B cell (primary cell): ENCODE measurements at regions of chrX and their contacts with region 1.

Region 1: GRCh38 chrX:132615391-132616131 is 126.7 kb upstream of the MBNL3 start:
- DNase-seq: peak; percentile 57
- ATAC-seq: no peak
- H3K4me3 ChIP-seq: no peak overlapping the region
- H3K4me3 Mint-ChIP-seq: no peak overlapping the region
- H3K27ac ChIP-seq: no peak overlapping the region
- H3K27ac Mint-ChIP-seq: no peak overlapping the region
- H3K4me1 ChIP-seq: no peaks in the 10 kb centered on the region
- H3K4me1 Mint-ChIP-seq: no peaks in the 10 kb centered on the region
- H3K27me3 ChIP-seq: no peaks in the 10 kb centered on the region
- H3K27me3 Mint-ChIP-seq: no peaks in the 10 kb centered on the region
- CTCF ChIP-seq: peak; percentile 61

Region 2: GRCh38 chrX:131854581-131854980 is 761.0 kb before region 1 on chrX:
- CTCF ChIA-PET with region 1: interaction called, 5 read pairs
- POLR2A ChIA-PET with region 1: no interaction called
- intact Hi-C with region 1: loop called (anchors 10 kb)
- DNase-seq: peak; percentile 31
- ATAC-seq: no peak
- H3K4me3 ChIP-seq: no peak overlapping the region
- H3K4me3 Mint-ChIP-seq: no peak overlapping the region
- H3K27ac ChIP-seq: no peak overlapping the region
- H3K27ac Mint-ChIP-seq: no peak overlapping the region
- H3K4me1 ChIP-seq: no peaks in the 10 kb centered on the region
- H3K4me1 Mint-ChIP-seq: no peaks in the 10 kb centered on the region
- H3K27me3 ChIP-seq: peaks cover 0 to 2% (median 0%) of the 10 kb centered on the region in 4 experiments
- H3K27me3 Mint-ChIP-seq: no peaks in the 10 kb centered on the region
- CTCF ChIP-seq: peak; percentile 34

Region 3: DNA sequence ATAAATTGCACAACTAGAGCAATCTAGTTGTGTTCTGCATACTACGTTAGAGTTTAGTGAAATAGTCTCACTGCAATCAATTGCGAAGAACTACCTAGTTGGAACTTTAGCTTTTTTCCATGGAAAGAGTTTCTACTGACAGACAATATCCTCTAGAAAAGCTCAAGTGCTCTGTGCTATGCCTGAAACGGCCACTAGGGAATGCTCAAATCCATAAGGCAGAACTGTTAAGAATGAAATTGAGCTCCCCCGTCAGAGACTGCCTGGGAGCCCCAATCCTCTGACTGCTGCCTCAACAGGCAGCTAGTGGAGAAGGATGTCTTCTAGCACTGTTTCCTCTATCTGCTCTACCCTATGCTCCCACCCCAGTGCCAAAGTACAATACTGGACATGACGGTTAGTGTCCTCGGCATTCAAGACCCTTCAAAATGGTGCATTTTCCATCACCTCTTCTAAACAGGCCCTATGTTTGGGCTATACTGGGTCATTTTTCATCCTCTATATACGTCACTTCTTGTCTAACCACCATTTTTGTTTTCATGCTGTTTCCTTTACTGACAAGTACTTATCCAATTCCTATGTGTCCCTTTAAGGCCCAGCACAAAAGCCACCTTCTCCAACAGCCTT is 523.0 kb before region 1 on chrX:
- CTCF ChIA-PET with region 1: interaction called, 4 read pairs
- POLR2A ChIA-PET with region 1: no interaction called
- intact Hi-C with region 1: loop called (anchors 5 kb)
- DNase-seq: peak; percentile 59
- ATAC-seq: peak; percentile 65
- H3K4me3 ChIP-seq: no peak overlapping the region
- H3K4me3 Mint-ChIP-seq: no peak overlapping the region
- H3K27ac ChIP-seq: no peak overlapping the region
- H3K27ac Mint-ChIP-seq: no peak overlapping the region
- H3K4me1 ChIP-seq: no peaks in the 10 kb centered on the region
- H3K4me1 Mint-ChIP-seq: no peaks in the 10 kb centered on the region
- H3K27me3 ChIP-seq: no peaks in the 10 kb centered on the region
- H3K27me3 Mint-ChIP-seq: peaks cover 3% of the 10 kb centered on the region
- CTCF ChIP-seq: peak; percentile 67

Region 4: GRCh38 chrX:132181353-132181752 is 434.2 kb before region 1 on chrX:
- CTCF ChIA-PET with region 1: no interaction called
- POLR2A ChIA-PET with region 1: no interaction called
- intact Hi-C with region 1: no loop called
- DNase-seq: no peak
- ATAC-seq: no peak
- H3K4me3 ChIP-seq: no peak overlapping the region
- H3K4me3 Mint-ChIP-seq: no peak overlapping the region
- H3K27ac ChIP-seq: no peak overlapping the region
- H3K27ac Mint-ChIP-seq: no peak overlapping the region
- H3K4me1 ChIP-seq: no peaks in the 10 kb centered on the region
- H3K4me1 Mint-ChIP-seq: no peaks in the 10 kb centered on the region
- H3K27me3 ChIP-seq: no peaks in the 10 kb centered on the region
- H3K27me3 Mint-ChIP-seq: no peaks in the 10 kb centered on the region
- CTCF ChIP-seq: no peak

Region 5: DNA sequence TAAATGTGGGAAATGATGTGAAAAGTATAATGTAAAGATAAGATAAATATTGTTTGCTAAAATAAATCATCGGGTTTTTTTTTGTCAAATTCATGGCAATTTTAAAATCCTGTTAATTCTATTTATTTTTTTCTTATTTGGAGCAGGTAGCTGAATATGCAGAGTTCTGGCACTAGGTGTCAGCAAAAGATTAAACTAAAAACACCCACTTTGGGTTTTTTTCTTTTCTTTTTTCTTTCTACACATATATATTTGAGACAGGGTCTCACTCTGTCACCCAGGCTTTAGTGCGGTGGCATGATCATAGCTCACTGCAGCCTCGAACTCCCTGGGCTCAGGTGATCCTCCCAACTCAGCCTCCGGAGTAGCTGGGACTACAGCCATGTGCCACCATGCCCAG is 389.4 kb before region 1 on chrX:
- CTCF ChIA-PET with region 1: interaction called, 16 read pairs
- POLR2A ChIA-PET with region 1: no interaction called
- intact Hi-C with region 1: loop called (anchors 1 kb)
- DNase-seq: no peak
- ATAC-seq: no peak
- H3K4me3 ChIP-seq: no peak overlapping the region
- H3K4me3 Mint-ChIP-seq: no peak overlapping the region
- H3K27ac ChIP-seq: no peak overlapping the region
- H3K27ac Mint-ChIP-seq: no peak overlapping the region
- H3K4me1 ChIP-seq: no peaks in the 10 kb centered on the region
- H3K4me1 Mint-ChIP-seq: peaks cover 6% of the 10 kb centered on the region
- H3K27me3 ChIP-seq: peaks cover 0 to 3% (median 0%) of the 10 kb centered on the region in 4 experiments
- H3K27me3 Mint-ChIP-seq: no peaks in the 10 kb centered on the region
- CTCF ChIP-seq: peak; percentile 51

Region 6: DNA sequence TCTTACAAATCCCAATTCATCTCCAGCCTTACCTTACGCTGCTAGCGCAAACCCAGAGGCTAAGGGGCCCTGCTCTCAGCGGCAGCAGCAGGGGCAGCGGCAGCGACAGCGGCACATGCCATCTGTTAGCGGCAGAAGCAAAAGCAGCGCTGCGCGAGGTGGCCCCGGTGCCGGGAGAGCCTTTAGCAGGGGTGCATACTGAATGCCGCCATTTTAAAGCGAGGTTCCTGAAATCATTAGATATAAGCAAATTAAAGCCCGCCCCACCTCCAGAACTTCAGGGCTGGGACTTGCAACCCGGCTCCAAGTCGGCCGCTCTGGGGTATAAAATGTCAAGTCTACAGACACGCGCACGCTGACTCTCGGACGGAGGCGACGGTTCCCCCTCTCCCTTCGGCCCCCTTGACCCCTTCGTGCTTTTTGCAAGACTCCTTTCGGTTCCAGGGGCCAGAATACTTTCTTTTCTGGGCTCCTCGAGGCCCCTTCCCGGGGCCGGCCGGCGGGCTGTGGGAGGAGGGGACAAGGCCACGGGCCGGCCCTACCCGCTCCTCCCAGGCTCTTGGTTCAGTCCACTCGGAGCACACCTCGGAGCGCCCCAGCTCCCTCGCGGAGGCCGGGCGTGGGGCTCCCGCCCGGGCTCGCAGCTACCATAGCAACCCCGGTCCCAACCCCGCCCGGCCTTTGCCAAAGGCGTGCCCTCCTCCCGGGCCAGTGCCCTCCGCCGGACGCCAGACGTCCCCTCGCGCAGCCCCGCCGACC is 126.6 kb before region 1 on chrX and contains the start of gene MBNL3:
- CTCF ChIA-PET with region 1: interaction called, 9 read pairs
- POLR2A ChIA-PET with region 1: no interaction called
- intact Hi-C with region 1: loop called (anchors 5 kb)
- DNase-seq: peak; percentile 87
- ATAC-seq: peak; percentile 67
- H3K4me3 ChIP-seq: peak within 1 kb of the TSS; percentile 61 to 76 (median 66)
- H3K4me3 Mint-ChIP-seq: peak within 1 kb of the TSS; percentile 95
- H3K27ac ChIP-seq: peak within 1 kb of the TSS; percentile 85 to 87
- H3K27ac Mint-ChIP-seq: peak within 1 kb of the TSS; percentile 98
- H3K4me1 ChIP-seq: peaks cover 51 to 53% of the 10 kb centered on the region in 2 donors
- H3K4me1 Mint-ChIP-seq: peaks cover 51% of the 10 kb centered on the region
- H3K27me3 ChIP-seq: no peaks in the 10 kb centered on the region
- H3K27me3 Mint-ChIP-seq: no peaks in the 10 kb centered on the region
- CTCF ChIP-seq: no peak
- total RNA-seq, gene MBNL3: 60.2 and 63.1 TPM in 2 replicates

Region 7: DNA sequence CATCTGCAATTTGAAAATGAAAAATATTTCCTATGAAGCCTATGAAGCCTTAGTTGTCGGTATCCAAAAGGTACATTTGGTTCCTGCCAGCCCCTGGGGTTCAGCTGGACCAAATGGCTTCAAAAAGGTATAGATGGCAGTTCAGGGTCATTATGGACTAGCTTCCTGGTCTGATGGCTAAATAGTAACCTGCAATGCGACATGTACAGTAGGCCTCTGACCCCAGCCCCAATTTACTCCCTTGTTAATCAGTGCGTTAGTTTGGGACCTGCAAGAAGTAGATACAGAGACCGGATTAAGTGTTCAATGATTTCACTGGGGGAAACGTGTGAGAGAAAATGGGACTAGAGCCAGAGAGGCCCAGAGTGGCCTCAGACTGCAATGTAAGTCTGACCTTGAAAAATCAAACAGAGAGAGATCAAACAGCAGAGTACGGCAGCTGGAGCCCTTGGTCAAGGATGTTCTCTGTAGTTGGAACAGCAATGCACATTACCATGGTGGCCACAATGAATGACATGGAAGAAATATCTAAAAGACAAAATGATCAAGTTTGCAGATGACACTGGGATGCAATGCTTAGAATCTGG is 11.8 kb before region 1 on chrX:
- CTCF ChIA-PET with region 1: interaction called, 10 read pairs
- POLR2A ChIA-PET with region 1: no interaction called
- intact Hi-C with region 1: no loop called
- DNase-seq: no peak
- ATAC-seq: no peak
- H3K4me3 ChIP-seq: no peak overlapping the region
- H3K4me3 Mint-ChIP-seq: no peak overlapping the region
- H3K27ac ChIP-seq: no peak overlapping the region
- H3K27ac Mint-ChIP-seq: no peak overlapping the region
- H3K4me1 ChIP-seq: no peaks in the 10 kb centered on the region
- H3K4me1 Mint-ChIP-seq: no peaks in the 10 kb centered on the region
- H3K27me3 ChIP-seq: peaks cover 0 to 10% (median 0%) of the 10 kb centered on the region in 4 experiments
- H3K27me3 Mint-ChIP-seq: peaks cover 4% of the 10 kb centered on the region
- CTCF ChIP-seq: no peak